HEK293 (cell line): ENCODE measurements at regions of chr2 and their contacts with region 1.

Region 1: GRCh38 chr2:85282914-85283313 is 44.9 kb downstream of the TGOLN2 start:
- H3K4me3 ChIP-seq: no peak overlapping the region
- H3K27ac ChIP-seq: no peak overlapping the region
- H3K4me1 ChIP-seq: no peaks in the 10 kb centered on the region
- CTCF ChIP-seq: no peak

Region 2: GRCh38 chr2:85132834-85133637 is 149.9 kb before region 1 on chr2 and contains the start of gene TCF7L1:
- CTCF ChIA-PET with region 1: interaction called, 36 read pairs
- POLR2A ChIA-PET with region 1: interaction called, 6 read pairs
- H3K4me3 ChIP-seq: peak within 1 kb of the TSS; percentile 58
- H3K27ac ChIP-seq: peak within 1 kb of the TSS; percentile 41; the same call in 1 of the 2 replicates
- H3K4me1 ChIP-seq: peaks cover 3% of the 10 kb centered on the region; the same call in 1 of the 2 replicates
- CTCF ChIP-seq: peak; percentile 91